ENCODE measurements at regions of chr11 and their contacts with region 1.

Region 1: GRCh38 chr11:2885676-2886081 is at the start of gene CDKN1C:
- DNase-seq: peak; percentile 89
- H3K4me3 ChIP-seq: peak within 1 kb of the TSS; percentile 62 to 86 (median 72)
- H3K27ac ChIP-seq: peak within 1 kb of the TSS; percentile 75 to 91 (median 82)
- H3K4me1 ChIP-seq: peaks cover 11 to 38% (median 28%) of the 10 kb centered on the region in 4 donors
- H3K27me3 ChIP-seq: peaks cover 17% of the 10 kb centered on the region
- CTCF ChIP-seq: no peak
- EP300 ChIP-seq: no peak
- POLR2A ChIP-seq: peak; percentile 86
- total RNA-seq, gene CDKN1C: 12.4 to 40.0 (median 27.7) TPM

Region 2: DNA sequence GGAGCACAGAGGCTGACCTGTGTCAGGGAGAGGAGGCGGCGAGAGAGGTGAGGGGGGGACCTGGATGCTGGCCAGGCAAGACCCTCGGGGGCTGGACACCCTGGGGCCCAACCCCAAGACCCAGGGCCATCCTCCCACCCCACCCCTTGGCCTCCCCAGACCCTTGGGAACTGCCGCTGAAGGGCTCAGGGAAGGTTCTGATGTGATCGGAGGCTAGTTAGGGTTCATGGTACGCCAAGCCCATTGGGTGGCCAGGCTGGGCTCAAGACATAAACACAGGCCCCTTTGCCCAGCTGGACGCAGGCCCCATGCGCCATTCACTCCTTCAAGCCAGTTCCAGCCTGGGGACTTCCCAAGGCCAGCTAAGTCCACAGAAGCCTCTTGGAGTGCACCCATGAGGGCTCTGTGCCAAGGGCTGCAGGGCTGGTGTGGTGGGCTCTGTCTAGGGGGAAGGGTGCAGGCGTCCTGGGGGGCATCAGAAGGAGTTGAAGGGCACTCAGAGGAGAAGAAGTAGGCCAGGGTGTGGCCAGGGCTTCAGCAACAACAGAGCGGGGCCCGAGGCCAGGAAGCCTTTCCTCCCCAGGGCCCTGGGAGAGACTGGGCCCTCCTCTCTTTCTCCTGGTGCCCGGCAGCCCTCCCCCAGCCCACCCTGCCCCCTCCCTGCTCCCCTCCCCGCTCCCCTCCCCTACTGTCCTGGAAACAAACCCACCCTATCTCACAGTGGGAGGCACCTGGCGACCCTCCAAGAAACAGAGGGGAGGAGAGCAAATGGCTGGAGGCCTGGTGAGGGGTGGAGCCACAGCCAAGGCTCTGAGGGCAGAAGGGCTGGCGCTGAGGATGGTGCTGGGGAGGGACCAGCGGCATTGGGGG is 570.9 kb before region 1 on chr11:
- in situ Hi-C with region 1: loop called in 1 of 4 experiments (anchors 25 kb)
- intact Hi-C with region 1: loop called (anchors 5 kb)
- DNase-seq: peak; percentile 67
- H3K4me3 ChIP-seq: no peak overlapping the region
- H3K27ac ChIP-seq: peak overlapping the region; percentile 71 to 84 (median 76)
- H3K4me1 ChIP-seq: peaks cover 7 to 25% (median 14%) of the 10 kb centered on the region in 4 donors
- H3K27me3 ChIP-seq: no peaks in the 10 kb centered on the region
- CTCF ChIP-seq: no peak
- EP300 ChIP-seq: no peak
- POLR2A ChIP-seq: no peak

Region 3: DNA sequence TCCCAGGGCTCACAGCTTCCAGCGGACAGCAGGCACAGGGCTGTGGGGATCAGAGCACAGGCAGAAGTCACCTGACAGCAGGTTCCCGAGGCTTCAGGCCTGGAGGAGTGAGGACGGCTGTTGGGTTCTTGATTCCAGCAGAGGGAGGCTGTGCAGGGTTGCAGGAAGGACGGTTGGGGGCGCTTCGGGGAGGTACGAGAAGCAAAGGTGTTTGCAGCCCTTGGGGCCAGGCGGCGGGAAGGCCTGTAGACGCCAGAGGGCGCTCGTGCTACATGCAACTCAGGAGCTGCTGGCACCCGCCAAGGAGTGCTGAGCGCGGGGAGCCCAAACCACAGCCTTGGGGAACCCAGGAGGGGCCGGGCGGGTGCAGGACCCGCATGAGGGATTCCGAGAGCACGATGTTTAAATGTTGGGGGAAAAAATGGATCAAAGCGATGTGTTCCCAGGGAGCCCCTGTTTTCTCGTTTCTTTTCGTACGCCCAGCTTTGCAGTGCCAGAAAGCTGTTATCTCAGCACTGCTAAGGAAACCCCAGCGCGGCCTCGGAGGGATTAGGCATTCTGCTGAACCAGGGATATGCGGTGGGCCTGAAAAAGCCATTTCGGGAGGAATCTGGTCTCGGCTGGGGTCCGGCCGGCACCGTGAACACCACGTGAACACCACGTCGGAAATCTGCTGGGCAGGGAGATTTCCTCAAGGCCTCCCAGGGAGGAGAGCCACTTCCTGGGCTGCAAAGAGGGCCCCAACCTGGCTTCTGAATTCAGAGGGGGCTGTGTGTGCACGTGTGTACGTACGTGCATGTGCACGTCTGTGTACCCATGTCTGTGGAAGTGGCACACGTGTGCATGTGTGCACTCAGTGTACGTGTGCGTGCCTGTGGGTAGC is 352.7 kb before region 1 on chr11:
- in situ Hi-C with region 1: loop called in 3 of 4 experiments (anchors 5 kb)
- intact Hi-C with region 1: loop called (anchors 1 kb)
- DNase-seq: peak; percentile 93
- H3K4me3 ChIP-seq: peak overlapping the region in 2 of 4 donors; percentile 9 to 12
- H3K27ac ChIP-seq: peak overlapping the region in 2 of 4 donors; percentile 8 to 37
- H3K4me1 ChIP-seq: peaks cover 5 to 22% (median 7%) of the 10 kb centered on the region in 4 donors
- H3K27me3 ChIP-seq: no peaks in the 10 kb centered on the region
- CTCF ChIP-seq: peak; percentile 99
- EP300 ChIP-seq: no peak
- POLR2A ChIP-seq: no peak

Region 4: GRCh38 chr11:2778630-2779498 is 106.8 kb before region 1 on chr11:
- in situ Hi-C with region 1: no loop called
- intact Hi-C with region 1: loop called (anchors 10 kb)
- DNase-seq: peak; percentile 86
- H3K4me3 ChIP-seq: peak overlapping the region in 2 of 4 donors; percentile 4 to 12
- H3K27ac ChIP-seq: peak overlapping the region; percentile 80 to 92 (median 86)
- H3K4me1 ChIP-seq: peaks cover 16 to 34% (median 27%) of the 10 kb centered on the region in 4 donors
- H3K27me3 ChIP-seq: no peaks in the 10 kb centered on the region
- CTCF ChIP-seq: peak; percentile 31 to 74 (median 47)
- EP300 ChIP-seq: peak; percentile 47
- POLR2A ChIP-seq: no peak